ENCODE measurements at regions of chr1 and their contacts with region 1.

Region 1: DNA sequence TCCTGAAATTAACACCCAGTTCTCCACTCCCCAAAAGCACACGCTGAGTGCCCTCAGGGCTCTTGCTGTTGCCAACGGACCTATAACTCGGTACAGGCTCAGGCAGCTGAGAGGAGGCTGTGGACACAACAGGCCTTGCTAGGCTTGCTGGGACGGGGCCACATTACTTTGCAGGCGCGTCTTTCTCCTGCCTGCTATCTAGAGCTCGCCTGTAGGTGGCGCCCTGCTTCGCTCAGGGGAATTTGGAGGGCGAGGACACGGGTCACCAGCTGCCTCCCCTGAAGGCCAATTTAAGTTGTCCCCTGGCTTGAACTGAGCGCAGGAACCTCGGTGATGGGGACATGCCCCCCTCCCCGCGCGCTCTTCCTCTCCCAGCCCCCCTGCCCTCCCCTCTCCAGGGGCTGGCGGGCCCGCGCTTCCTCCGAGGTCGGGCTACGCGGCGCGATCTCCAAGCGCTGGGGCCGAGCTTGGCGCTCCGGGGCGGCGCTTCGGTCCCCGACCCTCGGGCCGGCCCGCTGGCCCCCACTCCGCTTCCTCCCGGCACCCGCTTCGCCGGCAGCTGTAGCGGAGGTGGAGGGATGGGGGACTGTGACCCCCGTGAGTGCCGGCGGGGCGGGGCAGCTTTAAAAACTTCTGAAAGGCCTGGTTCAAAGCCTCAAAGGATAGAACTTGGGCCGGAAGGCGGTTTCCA is 32.4 kb upstream of the NFIA start:
- DNase-seq: peak; percentile 87 to 93
- ATAC-seq: peak; percentile 91 to 92 (median 92)
- H3K4me3 ChIP-seq: peak overlapping the region; percentile 51
- H3K4me3 Mint-ChIP-seq: peak overlapping the region; percentile 76
- H3K27ac ChIP-seq: no peak overlapping the region
- H3K27ac Mint-ChIP-seq: no peak overlapping the region
- H3K4me1 ChIP-seq: peaks cover 32% of the 10 kb centered on the region
- H3K4me1 Mint-ChIP-seq: peaks cover 23 to 25% of the 10 kb centered on the region in 2 donors
- H3K27me3 ChIP-seq: peaks cover 33% of the 10 kb centered on the region
- H3K27me3 Mint-ChIP-seq: peaks cover 49 to 53% of the 10 kb centered on the region in 2 donors
- CTCF ChIP-seq: peak; percentile 92

Region 2: GRCh38 chr1:61102041-61102440 is 52.0 kb after region 1 on chr1:
- intact Hi-C with region 1: loop called (anchors 10 kb)
- DNase-seq: no peak
- ATAC-seq: no peak
- H3K4me3 ChIP-seq: no peak overlapping the region
- H3K4me3 Mint-ChIP-seq: no peak overlapping the region
- H3K27ac ChIP-seq: no peak overlapping the region
- H3K27ac Mint-ChIP-seq: no peak overlapping the region
- H3K4me1 ChIP-seq: no peaks in the 10 kb centered on the region
- H3K4me1 Mint-ChIP-seq: no peaks in the 10 kb centered on the region
- H3K27me3 ChIP-seq: no peaks in the 10 kb centered on the region
- H3K27me3 Mint-ChIP-seq: peaks cover 5 to 39% of the 10 kb centered on the region in 2 donors
- CTCF ChIP-seq: no peak

Region 3: DNA sequence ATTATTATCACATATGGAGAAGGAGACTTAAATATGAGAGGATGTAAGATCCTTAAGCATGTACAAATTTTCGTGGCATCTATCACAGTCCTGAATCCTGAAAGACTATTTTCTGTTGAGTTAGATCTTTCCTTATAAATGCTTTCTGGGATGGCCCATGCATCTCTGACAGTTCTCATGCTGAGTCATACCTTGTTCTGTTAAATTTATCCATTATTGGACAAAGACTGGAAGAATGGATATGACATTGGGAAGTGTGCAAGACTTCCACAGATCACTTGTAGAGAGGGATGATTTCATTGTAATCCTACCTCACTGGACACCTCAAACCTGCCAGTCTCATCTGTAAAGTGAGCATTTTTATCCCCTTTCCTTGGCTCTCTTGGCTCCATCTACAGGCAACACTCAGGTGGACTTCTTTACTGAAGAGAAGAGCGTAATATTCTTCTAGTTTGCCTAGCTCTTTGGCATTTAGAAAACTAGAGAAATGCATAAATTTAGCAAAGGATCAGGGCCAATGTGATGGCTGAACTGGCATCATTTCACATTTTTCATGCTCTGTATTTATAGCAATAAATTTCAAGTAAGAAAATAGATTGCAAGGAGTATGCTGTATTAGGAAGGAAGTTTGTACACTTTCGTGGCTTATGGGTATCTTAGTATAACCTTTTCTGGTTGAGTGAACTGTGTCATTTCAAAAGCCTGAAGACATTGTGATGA is 160.6 kb after region 1 on chr1:
- intact Hi-C with region 1: loop called (anchors 5 kb)
- DNase-seq: peak in 1 of 2 donors; percentile 36
- ATAC-seq: no peak
- H3K4me3 ChIP-seq: no peak overlapping the region
- H3K4me3 Mint-ChIP-seq: no peak overlapping the region
- H3K27ac ChIP-seq: no peak overlapping the region
- H3K27ac Mint-ChIP-seq: no peak overlapping the region
- H3K4me1 ChIP-seq: no peaks in the 10 kb centered on the region
- H3K4me1 Mint-ChIP-seq: no peaks in the 10 kb centered on the region
- H3K27me3 ChIP-seq: no peaks in the 10 kb centered on the region
- H3K27me3 Mint-ChIP-seq: peaks cover 6 to 35% of the 10 kb centered on the region in 2 donors
- CTCF ChIP-seq: no peak

Region 4: DNA sequence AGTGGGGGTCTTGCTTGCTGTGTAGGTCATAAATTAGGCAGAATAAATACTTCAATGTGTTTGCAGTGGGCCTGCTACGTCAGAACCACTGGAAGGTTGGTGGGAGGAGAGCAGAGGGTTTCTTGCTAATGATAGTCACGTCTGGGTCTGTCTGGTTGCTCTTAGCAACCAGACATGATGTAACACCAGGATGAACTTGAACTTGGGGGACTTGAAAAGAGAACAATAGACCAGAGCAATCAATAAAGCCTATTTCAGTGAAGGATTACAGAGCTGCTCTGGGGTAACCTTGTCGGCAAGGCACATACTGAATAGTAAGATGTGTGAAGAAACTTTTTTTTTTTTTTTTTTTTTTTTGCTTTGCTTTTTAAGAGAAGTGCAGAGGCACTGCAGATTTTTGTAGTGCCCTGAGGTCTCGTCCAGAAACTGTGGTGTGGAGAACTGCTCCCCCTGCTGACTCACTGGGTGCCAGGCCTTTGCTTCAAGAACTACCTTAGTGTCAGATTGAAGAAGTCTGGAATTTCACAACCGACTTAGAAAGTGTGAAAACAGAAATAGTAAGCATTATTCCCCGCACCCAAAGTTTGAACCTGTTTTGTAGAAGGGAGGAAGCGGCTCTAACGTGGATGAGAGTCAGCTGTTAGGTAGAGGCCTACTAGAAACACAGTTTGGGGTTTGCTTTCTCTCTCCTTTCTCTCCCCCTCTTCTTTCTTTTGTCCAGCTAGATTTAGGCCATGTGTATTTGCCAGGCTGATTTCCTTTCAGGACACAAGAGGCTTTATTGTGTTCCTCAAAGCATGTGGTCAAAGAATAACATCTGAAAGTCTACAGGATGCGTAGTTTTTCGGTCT is 403.3 kb after region 1 on chr1:
- intact Hi-C with region 1: loop called (anchors 2 kb)
- DNase-seq: peak; percentile 53 to 82
- ATAC-seq: peak; percentile 81 to 84 (median 82)
- H3K4me3 ChIP-seq: no peak overlapping the region
- H3K4me3 Mint-ChIP-seq: no peak overlapping the region
- H3K27ac ChIP-seq: no peak overlapping the region
- H3K27ac Mint-ChIP-seq: peak overlapping the region; percentile 45 to 62
- H3K4me1 ChIP-seq: peaks cover 7% of the 10 kb centered on the region
- H3K4me1 Mint-ChIP-seq: peaks cover 27 to 34% of the 10 kb centered on the region in 2 donors
- H3K27me3 ChIP-seq: no peaks in the 10 kb centered on the region
- H3K27me3 Mint-ChIP-seq: peaks cover 0 to 24% of the 10 kb centered on the region in 2 donors
- CTCF ChIP-seq: peak; percentile 66

Region 5: DNA sequence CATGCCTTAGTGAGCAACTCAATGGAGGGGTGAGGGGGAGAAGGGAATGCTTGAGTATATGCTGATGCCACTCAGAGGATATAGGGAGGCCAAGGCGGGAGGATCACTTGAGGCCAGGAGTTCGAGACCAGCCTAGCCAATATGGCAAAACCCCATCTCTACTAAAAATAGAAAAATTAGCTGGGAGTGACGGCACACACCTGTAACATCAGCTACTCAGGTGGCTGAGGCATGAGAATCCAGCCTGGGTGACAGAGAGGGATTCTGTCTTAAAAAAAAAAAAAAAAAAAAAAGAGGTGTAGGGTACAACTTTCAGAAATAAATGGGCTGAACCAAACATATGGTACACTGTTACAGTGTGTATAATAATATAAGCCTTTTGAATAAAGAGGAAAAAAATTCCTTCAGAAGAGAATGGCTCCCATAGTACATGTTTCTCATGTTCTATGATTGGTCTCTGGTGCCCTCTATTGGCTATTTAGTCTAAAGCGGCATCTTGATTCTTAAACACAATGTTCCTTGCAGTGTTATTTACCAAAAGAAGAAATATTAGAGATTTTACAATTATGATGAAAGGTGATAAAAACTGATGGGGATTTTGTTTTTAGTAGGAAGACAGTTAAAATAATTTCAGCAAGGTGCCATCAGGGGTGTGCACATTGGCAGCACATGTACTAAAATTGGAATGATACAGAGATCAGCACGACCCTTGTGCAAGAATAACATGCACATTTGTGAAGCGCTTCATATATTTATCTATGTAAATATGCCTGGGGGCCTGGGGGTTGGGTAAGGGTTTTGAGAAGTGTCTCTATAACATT is 802.1 kb after region 1 on chr1:
- intact Hi-C with region 1: loop called (anchors 2 kb)
- DNase-seq: peak in 1 of 2 donors; percentile 79
- ATAC-seq: peak; percentile 44 to 71 (median 53)
- H3K4me3 ChIP-seq: no peak overlapping the region
- H3K4me3 Mint-ChIP-seq: no peak overlapping the region
- H3K27ac ChIP-seq: no peak overlapping the region
- H3K27ac Mint-ChIP-seq: no peak overlapping the region
- H3K4me1 ChIP-seq: no peaks in the 10 kb centered on the region
- H3K4me1 Mint-ChIP-seq: no peaks in the 10 kb centered on the region
- H3K27me3 ChIP-seq: no peaks in the 10 kb centered on the region
- H3K27me3 Mint-ChIP-seq: no peaks in the 10 kb centered on the region
- CTCF ChIP-seq: peak; percentile 82